Caco-2 (cell line): ENCODE measurements at regions of chr19 and their contacts with region 1.

Region 1: GRCh38 chr19:9818734-9819589 is at the start of gene FBXL12:
- DNase-seq: peak; percentile 99 to 100
- H3K4me3 ChIP-seq: peak within 1 kb of the TSS; percentile 73
- H3K4me3 Mint-ChIP-seq: peak within 1 kb of the TSS; percentile 90
- H3K27ac Mint-ChIP-seq: peak within 1 kb of the TSS; percentile 92
- H3K4me1 ChIP-seq: peaks cover 5% of the 10 kb centered on the region
- H3K4me1 Mint-ChIP-seq: peaks cover 5% of the 10 kb centered on the region
- H3K27me3 ChIP-seq: no peaks in the 10 kb centered on the region
- H3K27me3 Mint-ChIP-seq: no peaks in the 10 kb centered on the region
- CTCF ChIP-seq: no peak
- total RNA-seq, gene FBXL12: 37.6 and 39.9 TPM in 2 replicates

Region 2: GRCh38 chr19:9834726-9835506 is 16.0 kb after region 1 on chr19 and contains the start of gene PIN1:
- CTCF ChIA-PET with region 1: interaction called, 5 read pairs
- POLR2A ChIA-PET with region 1: no interaction called
- intact Hi-C with region 1: loop called (anchors 1 kb)
- DNase-seq: peak; percentile 98
- H3K4me3 ChIP-seq: peak within 1 kb of the TSS; percentile 95
- H3K4me3 Mint-ChIP-seq: peak within 1 kb of the TSS; percentile 84
- H3K27ac Mint-ChIP-seq: peak within 1 kb of the TSS; percentile 83
- H3K4me1 ChIP-seq: no peaks in the 10 kb centered on the region; the same call in 1 of the 2 replicates
- H3K4me1 Mint-ChIP-seq: no peaks in the 10 kb centered on the region
- H3K27me3 ChIP-seq: no peaks in the 10 kb centered on the region
- H3K27me3 Mint-ChIP-seq: no peaks in the 10 kb centered on the region
- CTCF ChIP-seq: peak; percentile 30 to 40
- total RNA-seq, gene PIN1: 63.3 and 65.3 TPM in 2 replicates